Heart right ventricle (tissue), 16 donors: ENCODE measurements at regions of chr13 and their contacts with region 1.

Region 1: DNA sequence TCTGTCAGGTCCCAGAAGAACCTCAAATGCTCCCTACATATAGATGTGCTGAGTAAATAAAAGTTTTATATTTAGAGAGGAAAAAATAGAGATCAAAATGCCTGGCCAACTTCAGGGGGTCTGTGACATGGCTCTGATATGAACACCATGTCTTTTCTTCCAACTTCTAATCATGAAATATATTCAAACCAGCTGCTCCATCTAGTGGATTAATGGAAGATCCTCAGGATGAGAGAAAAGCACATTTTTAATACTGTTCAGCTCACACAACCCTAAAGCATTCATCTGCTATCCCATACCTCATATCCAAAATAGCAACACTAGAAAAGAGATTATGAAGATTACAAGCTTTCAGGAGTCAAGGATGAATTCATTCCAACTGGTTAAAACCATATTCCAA is 56.0 kb upstream of the DOCK9 start:
- DNase-seq: no peak
- ATAC-seq: peak; percentile 41 to 88 (median 80)
- H3K4me3 ChIP-seq: no peak overlapping the region
- H3K27ac ChIP-seq: peak overlapping the region in 2 of 10 donors; percentile 3 to 11
- H3K4me1 ChIP-seq: peaks cover 0 to 22% (median 7%) of the 10 kb centered on the region in 9 donors
- H3K27me3 ChIP-seq: peaks cover 0 to 77% (median 0%) of the 10 kb centered on the region in 7 donors
- CTCF ChIP-seq: peak; percentile 23 to 77 (median 63)

Region 2: GRCh38 chr13:98869408-98870090 is 164.3 kb before region 1 on chr13:
- intact Hi-C with region 1: loop called in 1 of 10 experiments (anchors 10 kb)
- DNase-seq: peak; percentile 40 to 41
- ATAC-seq: peak in 7 of 8 donors; percentile 34 to 69 (median 55)
- H3K4me3 ChIP-seq: no peak overlapping the region
- H3K27ac ChIP-seq: peak overlapping the region in 1 of 10 donors; percentile 15
- H3K4me1 ChIP-seq: peaks cover 0 to 9% (median 0%) of the 10 kb centered on the region in 9 donors
- H3K27me3 ChIP-seq: no peaks in the 10 kb centered on the region
- CTCF ChIP-seq: peak in 2 of 9 donors; percentile 13 to 21

Region 3: GRCh38 chr13:98890186-98890585 is 143.6 kb before region 1 on chr13:
- intact Hi-C with region 1: loop called in 6 of 10 experiments (anchors 5 to 10 kb)
- DNase-seq: no peak
- ATAC-seq: peak; percentile 44 to 90 (median 69)
- H3K4me3 ChIP-seq: no peak overlapping the region
- H3K27ac ChIP-seq: no peak overlapping the region
- H3K4me1 ChIP-seq: peaks cover 0 to 49% (median 22%) of the 10 kb centered on the region in 9 donors
- H3K27me3 ChIP-seq: no peaks in the 10 kb centered on the region
- CTCF ChIP-seq: no peak

Region 4: GRCh38 chr13:98977568-98978265 is 56.1 kb before region 1 on chr13 and contains the start of gene DOCK9:
- intact Hi-C with region 1: loop called in 4 of 10 experiments (anchors 5 kb)
- DNase-seq: peak; percentile 73 to 77
- ATAC-seq: peak; percentile 87 to 97 (median 93)
- H3K4me3 ChIP-seq: peak within 1 kb of the TSS; percentile 39 to 68 (median 58)
- H3K27ac ChIP-seq: peak within 1 kb of the TSS; percentile 41 to 88 (median 72)
- H3K4me1 ChIP-seq: peaks cover 0 to 71% (median 33%) of the 10 kb centered on the region in 9 donors
- H3K27me3 ChIP-seq: no peaks in the 10 kb centered on the region
- CTCF ChIP-seq: peak in 2 of 9 donors; percentile 19 to 20
- total RNA-seq, gene DOCK9: 31.6 to 73.7 (median 43.4) TPM